Astrocyte of the cerebellum (primary cell): ENCODE measurements at regions of chr19 and their contacts with region 1.

Region 1: DNA sequence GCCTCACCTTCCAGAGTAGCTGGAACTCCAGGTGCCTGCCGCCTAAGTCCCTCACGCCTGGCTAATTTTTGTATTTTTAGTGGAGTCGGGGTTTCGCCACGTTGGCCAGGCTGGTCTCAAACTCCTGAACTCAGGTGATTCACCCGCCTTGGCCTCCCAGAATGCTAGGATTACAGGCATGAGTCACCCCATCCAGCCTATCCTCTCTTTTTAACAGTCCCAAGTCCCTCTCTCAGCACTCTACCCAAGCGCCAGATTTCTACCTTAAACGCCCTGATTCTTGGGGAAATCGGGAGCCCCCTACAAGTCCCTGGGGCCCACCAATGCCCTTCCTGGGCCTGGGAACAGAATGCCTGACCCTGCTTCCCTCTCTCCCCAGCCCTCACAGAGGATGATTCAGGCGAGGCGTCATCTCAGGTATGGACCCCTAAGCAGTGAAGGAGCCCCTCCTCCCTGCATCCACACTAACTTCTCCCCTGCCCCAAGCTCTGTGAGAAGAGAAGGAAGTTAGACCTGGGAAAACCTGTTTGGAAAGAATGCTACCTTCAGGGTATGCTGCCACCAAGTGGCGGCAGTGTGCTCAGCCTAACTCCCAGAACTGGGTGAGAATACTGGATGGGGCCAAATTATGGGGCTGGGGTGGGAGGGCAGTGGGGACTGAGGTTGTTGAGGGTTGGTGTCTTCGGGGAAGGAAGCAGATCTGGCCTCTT is 20.8 kb upstream of the EBI3 start:
- DNase-seq: no peak
- H3K4me3 ChIP-seq: no peak overlapping the region
- CTCF ChIP-seq: peak; percentile 46

Region 2: GRCh38 chr19:3984908-3985642 is 223.5 kb before region 1 on chr19 and contains the start of gene EEF2:
- in situ Hi-C with region 1: loop called (anchors 25 kb)
- DNase-seq: peak; percentile 74
- H3K4me3 ChIP-seq: peak within 1 kb of the TSS; percentile 92
- CTCF ChIP-seq: no peak

Region 3: DNA sequence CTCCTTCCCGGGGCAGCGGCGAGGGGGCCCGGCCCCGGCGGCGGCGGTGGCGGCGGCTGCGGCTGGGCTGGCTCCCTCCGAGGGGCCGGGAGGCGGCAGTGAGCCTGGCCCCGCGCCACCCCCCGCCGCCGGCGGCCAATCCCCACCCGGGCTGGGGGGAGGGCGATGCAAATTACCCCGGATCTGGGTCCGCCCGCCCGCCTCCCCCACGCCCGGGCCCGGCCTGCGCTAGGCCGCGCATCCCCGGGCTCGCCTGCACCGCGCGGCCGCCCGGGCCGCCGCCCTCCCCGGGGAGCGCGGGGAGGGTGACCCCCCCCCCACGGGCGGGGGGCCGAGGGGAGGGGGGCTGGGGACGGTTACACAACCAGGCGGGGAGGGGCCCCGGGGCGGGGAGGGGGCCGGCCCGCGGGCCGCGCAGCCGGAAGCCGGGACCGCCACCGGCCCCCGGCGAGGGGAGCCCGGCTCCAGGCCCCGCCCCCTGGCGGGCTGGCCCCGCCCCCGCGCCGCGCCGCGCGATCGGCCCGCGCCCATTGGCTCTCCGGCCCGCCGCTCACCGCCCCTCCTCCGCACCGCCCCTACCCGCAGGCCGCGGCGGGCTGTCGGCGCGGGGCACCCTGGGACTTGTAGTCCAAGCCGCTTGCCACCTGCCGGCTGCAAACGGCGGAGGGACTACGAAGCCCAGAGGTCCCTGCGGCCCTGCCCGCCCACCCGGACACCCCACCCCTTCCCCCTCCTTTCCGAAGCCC is 142.9 kb before region 1 on chr19:
- in situ Hi-C with region 1: loop called (anchors 10 kb)
- DNase-seq: peak; percentile 92
- H3K4me3 ChIP-seq: peak overlapping the region; percentile 74
- CTCF ChIP-seq: no peak

Region 4: DNA sequence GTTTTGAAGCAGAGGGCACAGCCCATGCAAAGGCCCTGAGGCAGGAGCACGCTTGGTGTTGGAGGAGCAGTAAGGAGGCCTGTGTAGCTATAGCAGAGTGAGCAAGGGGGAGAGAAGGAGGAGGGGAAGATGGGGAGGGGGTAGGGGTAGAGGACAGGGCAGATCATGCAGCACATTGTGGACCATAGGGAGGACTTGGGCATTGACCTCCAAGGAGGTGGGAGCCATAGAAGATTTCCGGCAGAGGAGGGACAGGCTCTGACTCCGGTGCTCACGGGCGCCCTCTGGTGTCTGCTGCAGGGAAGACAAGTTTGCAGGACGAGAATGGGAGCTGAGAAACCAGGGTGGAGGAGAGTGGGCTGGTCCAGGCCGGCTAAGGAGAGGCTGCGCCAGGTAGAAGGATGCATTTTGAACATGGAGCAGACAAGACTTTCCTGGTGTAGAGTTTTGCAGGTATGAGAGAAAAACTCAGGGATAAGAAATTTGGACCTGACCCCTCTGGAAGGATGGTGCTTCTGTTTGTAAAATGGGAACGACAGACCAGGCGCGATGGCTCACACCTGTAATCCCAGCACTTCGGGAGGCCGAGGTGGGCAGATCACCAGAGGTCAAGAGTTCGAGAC is 68.8 kb before region 1 on chr19:
- in situ Hi-C with region 1: loop called (anchors 10 kb)
- DNase-seq: no peak
- H3K4me3 ChIP-seq: no peak overlapping the region
- CTCF ChIP-seq: peak; percentile 75

Region 5: GRCh38 chr19:4246767-4247593 is 38.4 kb after region 1 on chr19 and contains the start of gene YJU2:
- in situ Hi-C with region 1: no loop called
- DNase-seq: peak; percentile 99
- H3K4me3 ChIP-seq: peak within 1 kb of the TSS; percentile 54
- CTCF ChIP-seq: peak; percentile 67

Region 6: GRCh38 chr19:4284176-4284958 is 75.8 kb after region 1 on chr19:
- in situ Hi-C with region 1: no loop called
- DNase-seq: no peak
- H3K4me3 ChIP-seq: no peak overlapping the region
- CTCF ChIP-seq: no peak